Heart left ventricle (tissue), 16 donors: ENCODE measurements at regions of chr6 and their contacts with region 1.

Region 1: DNA sequence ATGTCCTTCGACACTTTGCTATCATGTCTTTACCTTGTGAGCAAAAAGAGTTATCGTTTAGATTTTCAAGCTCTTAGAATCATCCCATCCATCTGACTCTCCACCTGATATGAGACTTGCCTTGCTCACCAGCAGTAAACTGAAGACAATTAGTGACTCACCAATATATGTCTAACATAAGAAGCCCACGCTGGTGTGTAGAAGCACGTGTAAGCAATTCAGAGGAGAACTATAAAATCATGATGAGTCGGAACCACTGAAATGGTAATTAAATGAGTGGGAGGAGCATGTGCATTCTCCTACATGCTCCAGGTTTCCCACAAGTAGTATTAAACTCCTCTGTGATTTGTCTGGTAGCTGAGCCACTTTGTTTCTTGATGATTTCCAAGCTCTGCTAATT is 181.6 kb upstream of the RNF217 start:
- DNase-seq: no peak
- ATAC-seq: no peak
- H3K4me3 ChIP-seq: no peak overlapping the region
- H3K27ac ChIP-seq: no peak overlapping the region
- H3K4me1 ChIP-seq: no peaks in the 10 kb centered on the region
- H3K27me3 ChIP-seq: no peaks in the 10 kb centered on the region
- CTCF ChIP-seq: no peak
- POLR2A ChIP-seq: no peak

Region 2: GRCh38 chr6:124567401-124567800 is 213.2 kb before region 1 on chr6:
- intact Hi-C with region 1: no loop called
- DNase-seq: no peak
- ATAC-seq: no peak
- H3K4me3 ChIP-seq: no peak overlapping the region
- H3K27ac ChIP-seq: no peak overlapping the region
- H3K4me1 ChIP-seq: no peaks in the 10 kb centered on the region
- H3K27me3 ChIP-seq: no peaks in the 10 kb centered on the region
- CTCF ChIP-seq: no peak
- POLR2A ChIP-seq: no peak

Region 3: GRCh38 chr6:125393449-125393858 is 612.8 kb after region 1 on chr6:
- intact Hi-C with region 1: loop called in 1 of 10 experiments (anchors 5 kb)
- DNase-seq: no peak
- ATAC-seq: no peak
- H3K4me3 ChIP-seq: no peak overlapping the region
- H3K27ac ChIP-seq: no peak overlapping the region
- H3K4me1 ChIP-seq: no peaks in the 10 kb centered on the region
- H3K27me3 ChIP-seq: no peaks in the 10 kb centered on the region
- CTCF ChIP-seq: no peak
- POLR2A ChIP-seq: no peak